ENCODE measurements at regions of chr3 and their contacts with region 1.

Region 1: DNA sequence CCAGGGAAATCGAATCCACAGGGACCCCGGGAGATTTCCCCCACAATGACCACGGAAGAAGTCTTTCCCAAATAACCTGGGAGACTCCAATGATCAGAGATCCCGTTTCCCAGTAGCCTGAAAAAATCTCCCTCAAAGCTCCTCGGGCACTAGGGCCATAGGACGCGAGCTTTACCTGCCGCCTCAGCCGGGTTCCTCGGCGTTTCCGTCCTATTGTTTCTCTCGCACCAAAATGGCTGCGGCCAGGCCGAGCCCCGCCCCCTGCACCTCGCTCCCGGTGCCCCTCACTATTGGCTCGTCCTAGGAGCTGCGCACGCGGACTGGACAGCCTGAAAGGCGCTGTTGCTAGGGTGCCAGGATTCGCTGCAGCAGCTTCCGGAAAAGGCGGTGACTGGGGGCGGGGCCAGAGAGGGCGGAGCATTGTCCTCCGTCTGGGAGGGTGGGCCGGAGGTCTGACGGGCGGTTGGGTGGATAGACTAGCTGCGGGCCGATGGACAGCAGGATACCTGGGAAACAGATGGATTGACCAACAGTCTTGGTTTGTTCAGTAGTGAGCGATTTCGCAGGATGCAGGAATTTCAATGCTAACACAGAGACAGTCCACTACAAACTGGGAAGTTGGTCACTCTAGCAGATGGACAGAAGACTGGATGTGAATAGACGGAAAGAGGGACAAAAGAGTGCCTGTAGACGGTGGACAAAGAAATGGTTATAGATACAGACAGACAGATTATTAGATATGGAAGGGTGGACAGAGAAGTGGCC is at the start of gene IP6K2:
- DNase-seq: peak; percentile 99
- H3K4me3 Mint-ChIP-seq: peak within 1 kb of the TSS; percentile 97
- H3K27ac Mint-ChIP-seq: peak within 1 kb of the TSS; percentile 90
- H3K4me1 Mint-ChIP-seq: peaks cover 30% of the 10 kb centered on the region
- H3K27me3 Mint-ChIP-seq: no peaks in the 10 kb centered on the region
- total RNA-seq, gene IP6K2: 64.3 to 68.3 TPM

Region 2: DNA sequence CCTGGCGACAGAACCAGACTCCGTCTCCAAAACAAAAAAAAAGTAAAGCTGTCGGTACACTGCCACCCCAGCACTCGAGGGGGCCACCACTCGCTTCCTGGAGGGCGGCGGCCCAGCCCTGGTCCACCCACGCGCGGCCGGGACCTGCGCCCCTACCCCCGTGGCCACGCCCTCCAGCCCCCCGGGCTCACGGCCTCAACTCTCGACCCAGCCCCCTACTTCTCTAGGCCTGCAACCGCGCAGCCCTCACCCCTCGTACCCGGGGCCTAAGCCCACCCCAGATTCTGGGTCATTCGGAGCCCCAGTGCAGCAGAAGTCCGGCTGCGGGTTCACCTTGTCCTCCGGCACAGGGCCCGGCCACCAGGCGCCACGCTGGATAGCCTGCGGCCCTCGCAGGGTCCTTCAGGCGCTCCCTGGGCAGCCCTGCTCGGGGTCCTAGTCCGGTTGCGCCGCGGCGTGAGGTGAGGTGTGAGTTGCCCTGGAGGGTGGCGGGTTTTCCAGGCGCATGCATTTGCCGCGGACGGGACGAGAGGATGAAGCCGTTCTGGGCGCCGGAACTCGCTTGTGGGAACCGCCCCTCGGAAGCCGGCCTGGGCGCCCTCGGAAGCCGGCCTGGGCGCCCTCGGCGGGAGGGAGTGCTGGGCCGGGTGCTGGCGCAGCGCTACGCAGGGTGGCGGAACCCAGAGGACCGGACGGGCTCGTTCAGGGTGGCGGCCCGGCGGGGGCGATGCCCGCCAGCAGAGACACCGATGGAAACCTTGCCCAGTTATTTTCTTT is 416.0 kb before region 1 on chr3:
- CTCF ChIA-PET with region 1: no interaction called
- intact Hi-C with region 1: loop called (anchors 1 kb)
- DNase-seq: peak; percentile 94
- H3K4me3 Mint-ChIP-seq: peak within 1 kb of the TSS; percentile 94
- H3K27ac Mint-ChIP-seq: peak within 1 kb of the TSS; percentile 96
- H3K4me1 Mint-ChIP-seq: peaks cover 28% of the 10 kb centered on the region
- H3K27me3 Mint-ChIP-seq: no peaks in the 10 kb centered on the region

Region 3: GRCh38 chr3:48685602-48686511 is 31.3 kb before region 1 on chr3 and contains the start of gene NCKIPSD:
- CTCF ChIA-PET with region 1: interaction called, 3 read pairs
- intact Hi-C with region 1: loop called (anchors 1 kb)
- DNase-seq: peak; percentile 91
- H3K4me3 Mint-ChIP-seq: peak within 1 kb of the TSS; percentile 83
- H3K27ac Mint-ChIP-seq: peak within 1 kb of the TSS; percentile 73
- H3K4me1 Mint-ChIP-seq: peaks cover 25% of the 10 kb centered on the region
- H3K27me3 Mint-ChIP-seq: no peaks in the 10 kb centered on the region
- total RNA-seq, gene NCKIPSD: 27.3 to 28.7 TPM

Region 4: GRCh38 chr3:48811524-48811923 is 94.4 kb after region 1 on chr3:
- CTCF ChIA-PET with region 1: no interaction called
- intact Hi-C with region 1: no loop called
- DNase-seq: no peak
- H3K4me3 Mint-ChIP-seq: peak overlapping the region; percentile 38
- H3K27ac Mint-ChIP-seq: no peak overlapping the region
- H3K4me1 Mint-ChIP-seq: peaks cover 36% of the 10 kb centered on the region
- H3K27me3 Mint-ChIP-seq: no peaks in the 10 kb centered on the region

Region 5: GRCh38 chr3:48898383-48899234 is 181.4 kb after region 1 on chr3 and contains the start of gene SLC25A20:
- CTCF ChIA-PET with region 1: no interaction called
- intact Hi-C with region 1: loop called (anchors 2 kb)
- DNase-seq: peak; percentile 94
- H3K4me3 Mint-ChIP-seq: peak within 1 kb of the TSS; percentile 92
- H3K27ac Mint-ChIP-seq: peak within 1 kb of the TSS; percentile 91
- H3K4me1 Mint-ChIP-seq: peaks cover 29% of the 10 kb centered on the region
- H3K27me3 Mint-ChIP-seq: no peaks in the 10 kb centered on the region
- total RNA-seq, gene SLC25A20: 12.9 to 16.2 TPM

Region 6: DNA sequence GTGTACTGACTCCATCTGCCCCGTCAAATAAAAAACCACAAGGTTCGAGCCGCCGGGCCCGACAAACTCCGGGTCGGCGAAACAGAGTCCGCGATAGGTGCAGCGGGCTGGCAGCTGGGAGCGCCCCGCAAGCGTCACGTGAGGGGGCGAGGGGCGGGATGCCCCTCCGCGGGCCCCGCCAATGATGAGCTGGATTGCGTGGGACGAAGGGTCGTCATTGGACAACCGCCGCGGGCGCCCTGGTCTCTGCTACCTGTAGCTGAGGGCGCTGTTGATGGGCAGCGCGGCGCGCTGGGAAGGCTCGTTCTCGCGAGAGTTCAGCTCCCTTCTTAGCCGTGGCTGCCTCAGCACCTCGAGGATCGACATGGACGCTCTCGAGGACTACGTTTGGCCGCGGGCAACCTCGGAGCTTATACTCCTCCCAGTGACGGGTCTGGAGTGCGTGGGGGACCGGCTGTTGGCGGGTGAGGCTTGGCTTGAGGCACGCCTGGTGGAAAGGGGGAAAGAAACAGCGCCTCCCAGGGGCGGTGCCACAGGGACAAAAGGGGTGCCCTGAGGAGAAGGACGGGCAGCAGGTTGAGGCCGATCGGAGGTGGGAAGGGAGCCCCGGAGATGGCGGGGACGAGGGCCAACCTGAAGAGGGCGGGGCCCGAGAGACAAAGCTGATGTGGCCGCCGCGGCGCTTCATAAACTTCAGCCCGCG is 290.1 kb after region 1 on chr3 and contains the start of gene WDR6:
- CTCF ChIA-PET with region 1: no interaction called
- intact Hi-C with region 1: loop called (anchors 2 kb)
- DNase-seq: peak; percentile 99
- H3K4me3 Mint-ChIP-seq: peak within 1 kb of the TSS; percentile 99
- H3K27ac Mint-ChIP-seq: peak within 1 kb of the TSS; percentile 99
- H3K4me1 Mint-ChIP-seq: peaks cover 19% of the 10 kb centered on the region
- H3K27me3 Mint-ChIP-seq: no peaks in the 10 kb centered on the region
- total RNA-seq, gene WDR6: 119 to 120 TPM

Measured in activated naive CD4-positive, alpha-beta T cell treated with anti-CD3 and anti-CD28 coated beads for 36 hours (primary cell).